Right lobe of liver (tissue), 6 donors: ENCODE measurements at regions of chr7 and their contacts with region 1.

Region 1: GRCh38 chr7:36152756-36153570 is at the start of gene EEPD1:
- DNase-seq: peak; percentile 100
- ATAC-seq: peak; percentile 81 to 93 (median 84)
- H3K4me3 ChIP-seq: peak within 1 kb of the TSS; percentile 68 to 83 (median 81)
- H3K27ac ChIP-seq: peak within 1 kb of the TSS; percentile 86 to 96 (median 93)
- H3K4me1 ChIP-seq: peaks cover 0 to 61% (median 20%) of the 10 kb centered on the region in 4 donors
- H3K27me3 ChIP-seq: no peaks in the 10 kb centered on the region
- CTCF ChIP-seq: no peak
- POLR2A ChIP-seq: peak; percentile 98
- total RNA-seq, gene EEPD1: 5.9 to 18.6 (median 10.6) TPM

Region 2: GRCh38 chr7:36280840-36281812 is 128.2 kb after region 1 on chr7:
- intact Hi-C with region 1: loop called in 1 of 2 experiments (anchors 10 kb)
- DNase-seq: peak in 2 of 3 donors; percentile 46 to 79
- ATAC-seq: peak; percentile 31 to 82 (median 44)
- H3K4me3 ChIP-seq: no peak overlapping the region
- H3K27ac ChIP-seq: peak overlapping the region in 1 of 3 donors; percentile 57
- H3K4me1 ChIP-seq: peaks cover 0 to 18% (median 4%) of the 10 kb centered on the region in 4 donors
- H3K27me3 ChIP-seq: no peaks in the 10 kb centered on the region
- CTCF ChIP-seq: no peak
- POLR2A ChIP-seq: no peak